ENCODE measurements at regions of chr9 and their contacts with region 1.

Region 1: DNA sequence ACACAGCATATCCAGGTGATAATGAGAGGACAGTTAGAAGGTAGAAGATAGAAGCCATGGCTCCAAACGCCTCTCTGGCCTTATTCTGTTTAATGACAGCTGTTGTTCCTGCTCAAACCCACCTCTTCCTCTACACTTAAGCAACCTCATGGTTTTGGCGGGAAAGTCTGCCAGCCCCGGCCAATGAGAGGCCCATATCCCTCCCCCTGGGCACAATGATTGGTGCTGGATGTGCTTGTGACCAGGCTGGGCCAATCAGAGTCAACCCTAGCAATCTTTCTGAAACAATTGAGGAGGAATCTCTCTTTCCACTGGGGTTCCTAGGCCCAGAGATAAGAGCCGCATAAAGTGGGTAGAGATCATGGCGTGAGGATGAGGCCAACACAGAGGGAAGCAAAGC is 4.8 kb upstream of the GFI1B start:
- DNase-seq: peak in 1 of 5 donors; percentile 9
- H3K4me3 ChIP-seq: no peak overlapping the region
- H3K4me3 Mint-ChIP-seq: no peak overlapping the region
- H3K27ac ChIP-seq: no peak overlapping the region
- H3K27ac Mint-ChIP-seq: no peak overlapping the region
- H3K4me1 ChIP-seq: peaks cover 10% of the 10 kb centered on the region
- H3K4me1 Mint-ChIP-seq: peaks cover 4 to 11% (median 6%) of the 10 kb centered on the region in 4 donors
- H3K27me3 ChIP-seq: peaks cover 4% of the 10 kb centered on the region
- H3K27me3 Mint-ChIP-seq: peaks cover 15 to 25% of the 10 kb centered on the region in 2 donors

Region 2: GRCh38 chr9:132507746-132508469 is 465.8 kb before region 1 on chr9:
- CTCF ChIA-PET with region 1: interaction called, 3 read pairs
- POLR2A ChIA-PET with region 1: no interaction called
- intact Hi-C with region 1: loop called (anchors 5 kb)
- DNase-seq: peak; percentile 46 to 59 (median 56)
- H3K4me3 ChIP-seq: no peak overlapping the region
- H3K4me3 Mint-ChIP-seq: peak overlapping the region in 4 of 8 donors; percentile 33 to 64 (median 57)
- H3K27ac ChIP-seq: no peak overlapping the region
- H3K27ac Mint-ChIP-seq: peak overlapping the region in 3 of 7 donors; percentile 36 to 64 (median 41)
- H3K4me1 ChIP-seq: peaks cover 21% of the 10 kb centered on the region
- H3K4me1 Mint-ChIP-seq: peaks cover 11 to 22% (median 18%) of the 10 kb centered on the region in 4 donors
- H3K27me3 ChIP-seq: peaks cover 4% of the 10 kb centered on the region
- H3K27me3 Mint-ChIP-seq: peaks cover 1 to 4% of the 10 kb centered on the region in 2 donors

Region 3: DNA sequence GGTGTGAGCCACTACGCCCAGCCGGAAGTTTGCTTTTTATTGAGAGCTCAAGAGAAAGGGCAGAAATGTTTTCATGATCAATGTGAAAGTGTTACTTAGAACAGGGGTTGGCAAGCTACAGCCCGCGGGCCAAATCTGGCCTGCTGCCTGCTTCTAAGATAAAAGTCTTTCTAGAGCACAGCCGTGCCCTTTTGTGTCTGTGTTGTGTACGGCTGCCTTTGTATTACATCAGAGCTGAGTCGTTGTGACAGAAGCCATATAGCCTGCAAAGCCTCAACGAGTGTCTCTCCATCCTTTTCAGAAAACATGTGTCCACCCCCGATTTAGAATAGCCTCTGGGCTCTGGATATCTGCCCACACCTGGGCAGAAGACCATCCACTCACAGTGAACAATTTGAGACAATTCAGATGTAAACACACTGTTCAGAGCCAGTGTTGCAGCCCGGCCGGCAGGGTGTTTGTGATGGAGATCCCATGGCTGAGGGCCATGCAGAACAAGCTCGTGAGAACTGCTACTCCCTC is 124.5 kb before region 1 on chr9:
- CTCF ChIA-PET with region 1: interaction called, 3 read pairs
- POLR2A ChIA-PET with region 1: no interaction called
- intact Hi-C with region 1: loop called (anchors 1 kb)
- DNase-seq: no peak
- H3K4me3 ChIP-seq: no peak overlapping the region
- H3K4me3 Mint-ChIP-seq: peak overlapping the region; percentile 51 to 76 (median 64)
- H3K27ac ChIP-seq: no peak overlapping the region
- H3K27ac Mint-ChIP-seq: peak overlapping the region in 5 of 7 donors; percentile 55 to 81 (median 65)
- H3K4me1 ChIP-seq: no peaks in the 10 kb centered on the region
- H3K4me1 Mint-ChIP-seq: peaks cover 2 to 10% (median 7%) of the 10 kb centered on the region in 4 donors
- H3K27me3 ChIP-seq: no peaks in the 10 kb centered on the region
- H3K27me3 Mint-ChIP-seq: peaks cover 2 to 6% of the 10 kb centered on the region in 2 donors

Region 4: GRCh38 chr9:132997591-132997990 is 23.9 kb after region 1 on chr9:
- CTCF ChIA-PET with region 1: no interaction called
- POLR2A ChIA-PET with region 1: no interaction called
- intact Hi-C with region 1: no loop called
- DNase-seq: no peak
- H3K4me3 ChIP-seq: no peak overlapping the region
- H3K4me3 Mint-ChIP-seq: no peak overlapping the region
- H3K27ac ChIP-seq: no peak overlapping the region
- H3K27ac Mint-ChIP-seq: peak overlapping the region in 1 of 7 donors; percentile 13
- H3K4me1 ChIP-seq: no peaks in the 10 kb centered on the region
- H3K4me1 Mint-ChIP-seq: peaks cover 0 to 4% (median 0%) of the 10 kb centered on the region in 4 donors
- H3K27me3 ChIP-seq: peaks cover 4% of the 10 kb centered on the region
- H3K27me3 Mint-ChIP-seq: peaks cover 25 to 36% of the 10 kb centered on the region in 2 donors